ENCODE measurements at regions of chr12 and their contacts with region 1.

Region 1: DNA sequence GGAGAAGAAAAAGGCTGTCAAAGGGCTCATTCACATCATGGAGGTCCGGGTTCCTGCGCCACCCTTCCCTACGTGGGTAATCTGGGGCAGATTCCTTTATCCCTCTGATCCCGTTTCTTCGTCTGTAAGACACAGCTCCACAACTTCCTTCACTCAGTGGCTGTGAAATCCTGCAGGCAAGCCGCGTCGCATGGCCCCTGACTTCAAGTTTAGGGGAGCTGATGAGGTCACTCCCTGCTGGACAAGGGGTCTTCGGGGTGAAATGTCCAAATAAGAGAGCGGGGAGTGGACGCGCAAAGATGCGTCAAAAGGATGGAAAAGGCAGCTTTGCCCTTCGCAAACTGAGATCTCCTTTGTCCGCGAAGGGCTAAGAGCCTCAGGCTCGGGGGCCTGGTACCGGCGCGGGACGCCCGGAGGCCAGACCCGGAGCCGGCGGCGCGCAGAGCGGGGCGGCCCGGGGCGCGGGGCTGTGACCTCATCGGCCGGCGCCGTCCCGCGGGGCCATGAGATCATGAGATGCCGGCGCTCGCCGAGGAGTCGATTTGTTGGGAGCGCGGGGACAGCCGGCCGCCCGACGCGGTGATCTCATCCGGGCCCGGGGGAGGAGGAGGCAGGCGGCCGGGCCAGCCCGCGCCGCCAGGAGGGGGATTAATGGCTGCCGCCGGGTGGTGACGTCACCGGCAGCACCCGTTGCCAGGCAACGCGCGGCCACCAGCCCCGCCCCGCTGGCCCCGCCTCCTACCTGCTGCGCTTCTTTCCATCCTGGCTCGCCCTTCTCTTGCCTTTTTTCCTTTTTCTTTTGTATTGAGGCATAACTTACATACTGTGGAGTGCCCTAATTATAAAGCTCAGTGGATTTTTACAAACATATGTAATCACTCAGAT is 62.1 kb downstream of the HRK start:
- DNase-seq: peak; percentile 79 to 99 (median 91)

Region 2: DNA sequence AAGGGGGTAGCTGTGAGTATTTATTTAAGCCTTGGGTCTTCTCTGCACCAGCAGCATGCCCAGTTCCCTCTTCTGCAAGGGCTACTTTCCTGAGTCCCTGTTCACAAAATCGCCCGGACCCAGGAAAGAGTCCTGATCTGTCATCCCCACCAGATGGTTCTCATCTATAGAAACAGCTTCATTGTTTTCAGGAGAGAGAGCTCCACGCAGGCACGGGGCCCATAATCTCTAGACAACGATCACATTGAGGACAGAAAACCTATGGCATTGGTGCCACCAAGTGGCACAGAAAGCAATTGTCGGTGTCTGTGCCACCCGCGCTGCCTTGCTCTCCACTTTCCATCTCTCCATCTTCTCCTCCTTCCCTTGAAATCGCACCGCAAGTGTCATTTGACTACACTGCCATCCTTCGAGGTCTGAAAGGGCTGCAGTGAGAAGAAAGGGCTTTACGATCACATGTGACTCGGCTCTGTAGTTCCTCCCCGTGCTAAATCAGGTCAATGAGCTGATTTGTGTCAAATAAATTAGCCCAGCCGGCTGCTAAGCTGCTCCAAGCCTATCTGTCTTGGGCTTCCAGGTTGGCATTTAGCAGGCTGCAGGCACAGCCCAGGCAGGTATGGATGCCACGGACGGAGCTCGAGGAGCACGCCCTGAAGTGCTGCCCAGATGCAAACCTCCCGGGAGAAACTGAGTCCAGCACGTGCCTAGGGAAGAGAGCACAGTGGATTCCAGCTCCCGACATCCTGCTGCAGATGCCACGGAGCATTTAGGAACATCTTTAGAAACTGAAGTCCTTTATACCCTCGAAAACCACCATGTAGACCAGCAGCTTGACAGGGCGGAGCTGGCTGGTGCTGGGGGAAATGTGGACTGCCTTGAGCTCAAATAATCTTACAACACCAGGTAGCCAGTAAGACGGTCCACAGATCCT is 110.1 kb before region 1 on chr12:
- intact Hi-C with region 1: no loop called
- DNase-seq: peak; percentile 71 to 97 (median 86)

Region 3: GRCh38 chr12:116737774-116738700 is 81.2 kb before region 1 on chr12 and contains the starts of genes RNFT2 and SPRING1:
- intact Hi-C with region 1: loop called (anchors 5 kb)
- DNase-seq: peak; percentile 99 to 100 (median 100)

Region 4: DNA sequence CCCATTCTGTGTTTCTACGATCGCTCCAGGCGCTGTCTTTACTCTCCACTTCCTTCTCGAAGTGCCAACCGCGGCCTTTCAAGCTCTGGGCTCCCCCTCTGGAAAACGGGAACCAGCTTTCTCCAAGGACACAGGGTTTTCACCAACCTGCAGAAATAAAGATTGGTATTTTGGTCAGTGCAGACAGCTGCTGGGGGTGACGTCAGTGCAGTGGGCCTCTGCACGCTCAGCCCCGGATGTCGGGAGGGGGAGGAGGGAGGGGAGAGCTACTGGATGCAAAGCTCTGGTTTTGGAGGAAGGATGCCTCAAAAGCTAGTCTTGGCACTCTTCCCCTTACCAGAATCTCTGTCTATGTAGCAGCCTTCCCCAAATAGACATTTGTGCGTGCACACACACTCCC is 42.1 kb after region 1 on chr12:
- intact Hi-C with region 1: loop called (anchors 5 kb)
- DNase-seq: peak; percentile 53 to 96 (median 80)

Region 5: GRCh38 chr12:117002051-117002817 is 183.0 kb after region 1 on chr12:
- intact Hi-C with region 1: no loop called
- DNase-seq: no peak